CD4-positive, alpha-beta T cell (primary cell): ENCODE measurements at regions of chr4 and their contacts with region 1.

Region 1: DNA sequence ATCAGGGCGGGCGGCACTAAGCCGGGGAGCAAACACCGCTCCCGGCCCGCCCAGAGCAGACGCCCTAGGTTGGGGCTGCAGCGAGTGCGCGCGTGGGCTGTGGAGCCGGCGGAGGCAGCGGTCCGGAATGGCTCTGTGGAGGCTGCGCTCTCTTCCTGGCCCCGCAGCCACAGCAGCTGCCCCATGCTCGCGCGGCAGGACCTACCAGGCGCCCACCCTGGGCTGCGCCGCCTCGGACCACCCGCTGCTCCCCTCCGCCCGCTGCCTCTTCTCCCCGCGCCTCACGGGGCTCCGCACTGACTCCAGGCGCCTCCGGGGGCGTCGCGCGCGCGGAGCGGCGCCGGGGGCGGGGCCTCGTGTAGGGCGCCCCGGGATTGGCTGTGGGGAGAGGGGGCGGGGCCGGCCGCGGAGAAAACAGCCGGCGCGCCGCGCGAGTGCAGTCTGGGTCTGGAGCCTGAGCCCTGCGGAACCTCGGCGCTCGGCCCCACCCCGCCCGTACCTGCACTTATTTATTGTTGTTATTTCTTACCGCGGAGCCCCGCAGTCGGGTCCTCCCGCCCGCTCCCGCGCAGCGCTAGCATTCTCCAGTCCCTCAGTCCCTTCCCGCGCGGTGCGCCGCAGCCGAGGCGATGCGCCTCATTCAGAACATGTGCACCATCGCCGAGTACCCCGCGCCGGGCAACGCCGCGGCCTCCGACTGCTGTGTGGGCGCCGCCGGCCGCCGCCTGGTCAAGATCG is at the start of gene RASL11B:
- DNase-seq: peak; percentile 65 to 93 (median 81)
- ATAC-seq: peak; percentile 98
- H3K4me3 ChIP-seq: peak within 1 kb of the TSS; percentile 58
- H3K4me3 Mint-ChIP-seq: peak within 1 kb of the TSS; percentile 83
- H3K27ac ChIP-seq: no peak within 1 kb of the TSS
- H3K27ac Mint-ChIP-seq: no peak within 1 kb of the TSS
- H3K4me1 ChIP-seq: peaks cover 18% of the 10 kb centered on the region
- H3K4me1 Mint-ChIP-seq: peaks cover 12% of the 10 kb centered on the region
- H3K27me3 ChIP-seq: peaks cover 19 to 20% of the 10 kb centered on the region in 2 experiments
- H3K27me3 Mint-ChIP-seq: peaks cover 46% of the 10 kb centered on the region
- CTCF ChIP-seq: peak; percentile 33
- total RNA-seq, gene RASL11B: 0.31 to 0.63 TPM

Region 2: DNA sequence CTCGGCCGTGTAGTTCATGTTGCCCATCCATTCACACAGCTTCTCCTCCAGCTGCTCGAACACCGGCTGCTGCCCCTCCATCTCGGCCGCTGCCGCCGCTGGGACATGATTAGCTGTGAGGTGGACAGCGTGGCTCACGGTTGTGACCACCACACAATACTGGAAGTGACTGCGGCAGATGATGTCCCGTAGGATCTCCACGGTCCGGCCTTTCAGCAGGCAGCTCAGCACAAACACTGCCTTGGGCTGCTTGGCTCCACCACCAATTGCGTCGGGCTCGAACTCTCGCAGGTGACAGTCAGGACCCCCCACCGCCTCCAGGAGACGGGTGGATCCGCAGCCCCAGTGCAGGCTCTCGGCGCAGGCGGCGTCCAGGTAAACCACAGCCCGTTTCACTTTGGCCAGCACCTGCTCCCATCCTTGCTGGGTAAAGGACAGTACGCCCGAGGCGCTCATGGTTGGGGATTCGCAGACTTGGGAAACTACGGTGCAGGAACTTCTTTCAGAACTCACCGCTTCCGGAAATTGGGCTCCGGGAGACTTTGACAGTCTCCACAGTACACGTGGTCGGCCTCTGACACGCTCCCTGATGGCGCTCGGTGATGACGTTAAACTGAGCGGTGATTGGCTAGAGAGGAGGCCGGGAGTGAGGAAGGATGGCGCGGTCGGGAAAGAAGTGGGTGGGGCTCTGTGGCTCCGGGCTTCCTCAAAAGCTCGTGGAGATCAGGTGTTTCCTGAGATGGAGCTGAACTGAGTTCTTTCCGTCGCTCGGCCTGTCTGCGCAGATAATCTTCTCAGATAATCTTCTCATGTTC is 503.6 kb after region 1 on chr4 and contains the start of gene SCFD2:
- CTCF ChIA-PET with region 1: no interaction called
- POLR2A ChIA-PET with region 1: no interaction called
- intact Hi-C with region 1: loop called in 1 of 2 experiments (anchors 10 kb)
- DNase-seq: peak; percentile 87 to 98 (median 95)
- ATAC-seq: peak; percentile 95
- H3K4me3 ChIP-seq: peak within 1 kb of the TSS; percentile 72
- H3K4me3 Mint-ChIP-seq: peak within 1 kb of the TSS; percentile 91
- H3K27ac ChIP-seq: peak within 1 kb of the TSS; percentile 75 to 77
- H3K27ac Mint-ChIP-seq: peak within 1 kb of the TSS; percentile 93
- H3K4me1 ChIP-seq: peaks cover 30% of the 10 kb centered on the region
- H3K4me1 Mint-ChIP-seq: peaks cover 55% of the 10 kb centered on the region
- H3K27me3 ChIP-seq: peaks cover 0 to 6% of the 10 kb centered on the region in 2 experiments
- H3K27me3 Mint-ChIP-seq: peaks cover 11% of the 10 kb centered on the region
- CTCF ChIP-seq: no peak
- total RNA-seq, gene SCFD2: 15.4 to 17.6 TPM

Region 3: GRCh38 chr4:54091637-54092404 is 1229.8 kb after region 1 on chr4:
- CTCF ChIA-PET with region 1: no interaction called
- POLR2A ChIA-PET with region 1: no interaction called
- intact Hi-C with region 1: loop called in 1 of 2 experiments (anchors 10 kb)
- DNase-seq: peak; percentile 66 to 93 (median 80)
- ATAC-seq: peak; percentile 93
- H3K4me3 ChIP-seq: peak overlapping the region; percentile 63
- H3K4me3 Mint-ChIP-seq: peak overlapping the region; percentile 88
- H3K27ac ChIP-seq: no peak overlapping the region
- H3K27ac Mint-ChIP-seq: no peak overlapping the region
- H3K4me1 ChIP-seq: peaks cover 30% of the 10 kb centered on the region
- H3K4me1 Mint-ChIP-seq: peaks cover 32% of the 10 kb centered on the region
- H3K27me3 ChIP-seq: peaks cover 49 to 53% of the 10 kb centered on the region in 2 experiments
- H3K27me3 Mint-ChIP-seq: peaks cover 62% of the 10 kb centered on the region
- CTCF ChIP-seq: no peak